ENCODE measurements at regions of chr5 and their contacts with region 1.

Region 1: GRCh38 chr5:171630027-171630669 is 155.5 kb upstream of the SMIM23 start:
- DNase-seq: peak; percentile 72
- H3K4me3 ChIP-seq: no peak overlapping the region
- H3K27ac ChIP-seq: no peak overlapping the region
- H3K4me1 ChIP-seq: no peaks in the 10 kb centered on the region
- H3K27me3 ChIP-seq: peaks cover 65% of the 10 kb centered on the region

Region 2: GRCh38 chr5:170111088-170111785 is 1518.9 kb before region 1 on chr5:
- in situ Hi-C with region 1: no loop called
- DNase-seq: no peak
- H3K4me3 ChIP-seq: no peak overlapping the region
- H3K27ac ChIP-seq: no peak overlapping the region
- H3K4me1 ChIP-seq: no peaks in the 10 kb centered on the region
- H3K27me3 ChIP-seq: peaks cover 4% of the 10 kb centered on the region; the same call in 1 of the 2 replicates

Region 3: DNA sequence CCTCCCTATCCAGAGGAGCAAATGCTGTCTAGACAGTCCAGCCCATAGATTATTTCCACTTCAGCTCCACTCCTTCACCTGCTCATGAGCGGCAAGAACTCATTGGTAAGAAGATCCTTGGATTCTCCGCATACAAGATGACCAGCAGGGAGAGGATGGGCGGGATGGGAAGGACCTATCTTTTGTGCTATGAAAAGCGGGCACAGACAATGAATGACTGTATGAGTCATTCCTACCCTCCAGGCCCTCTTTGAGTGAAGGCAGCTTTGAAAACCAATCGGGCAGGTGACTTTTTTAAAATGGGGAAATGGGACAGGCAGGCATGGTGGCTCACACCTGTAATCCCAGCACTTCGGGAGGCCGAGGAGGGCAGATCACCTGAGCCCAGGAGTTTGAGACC is 204.9 kb after region 1 on chr5:
- in situ Hi-C with region 1: loop called (anchors 10 kb)
- DNase-seq: no peak
- H3K4me3 ChIP-seq: no peak overlapping the region
- H3K27ac ChIP-seq: no peak overlapping the region
- H3K4me1 ChIP-seq: no peaks in the 10 kb centered on the region
- H3K27me3 ChIP-seq: no peaks in the 10 kb centered on the region